ENCODE measurements at regions of chr10 and their contacts with region 1.

Region 1: DNA sequence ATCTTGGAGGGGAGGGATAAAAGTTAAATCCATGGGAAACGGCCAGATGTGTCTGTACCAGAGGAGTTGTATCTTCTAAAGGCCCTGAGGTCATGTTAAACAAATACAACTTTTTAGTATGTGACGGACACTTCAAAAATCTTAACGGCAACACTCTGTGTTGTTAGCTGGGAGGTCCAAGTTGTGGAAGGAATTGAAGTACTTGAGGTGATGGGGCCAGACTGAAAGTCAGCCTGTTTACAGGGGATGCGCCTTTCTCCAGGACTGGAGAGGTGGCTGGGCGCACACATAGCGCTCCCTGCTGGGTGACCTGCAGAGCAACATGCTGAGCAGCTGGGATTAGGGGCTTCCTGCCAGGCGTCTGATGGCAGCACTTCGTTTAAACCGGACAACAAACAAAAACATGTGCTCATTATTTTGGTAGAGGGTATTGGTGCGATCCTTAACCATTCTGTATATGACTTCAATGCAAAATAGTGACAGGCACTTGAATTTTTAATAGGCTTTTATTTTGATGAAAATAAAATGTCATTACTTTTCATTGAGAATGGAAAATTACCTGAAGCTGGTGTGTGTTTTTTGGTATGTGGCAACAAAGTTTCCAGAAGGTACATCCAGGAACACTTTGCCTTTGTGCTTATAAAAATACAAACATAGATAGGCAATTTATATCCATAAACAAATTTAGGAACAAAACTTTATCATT is 198.2 kb downstream of the MLLT10 start:
- DNase-seq: peak; percentile 82
- ATAC-seq: peak; percentile 95
- H3K4me3 ChIP-seq: no peak overlapping the region
- H3K27ac ChIP-seq: no peak overlapping the region
- H3K4me1 ChIP-seq: peaks cover 4% of the 10 kb centered on the region
- H3K27me3 ChIP-seq: no peaks in the 10 kb centered on the region
- CTCF ChIP-seq: peak; percentile 93
- POLR2A ChIP-seq: no peak
- RAD21 ChIP-seq: peak; percentile 93

Region 2: GRCh38 chr10:21078410-21079329 is 653.5 kb before region 1 on chr10:
- CTCF ChIA-PET with region 1: no interaction called
- POLR2A ChIA-PET with region 1: no interaction called
- dilution Hi-C with region 1: no loop called
- in situ Hi-C with region 1: loop called (anchors 25 kb)
- intact Hi-C with region 1: no loop called
- DNase-seq: peak; percentile 61
- ATAC-seq: peak; percentile 98
- H3K4me3 ChIP-seq: no peak overlapping the region
- H3K27ac ChIP-seq: no peak overlapping the region
- H3K4me1 ChIP-seq: no peaks in the 10 kb centered on the region
- H3K27me3 ChIP-seq: 0 out of 2 replicates have a peak, but pooled peaks cover 2% of the 10 kb centered on the region
- CTCF ChIP-seq: peak; percentile 73
- POLR2A ChIP-seq: no peak
- RAD21 ChIP-seq: peak; percentile 84

Region 3: DNA sequence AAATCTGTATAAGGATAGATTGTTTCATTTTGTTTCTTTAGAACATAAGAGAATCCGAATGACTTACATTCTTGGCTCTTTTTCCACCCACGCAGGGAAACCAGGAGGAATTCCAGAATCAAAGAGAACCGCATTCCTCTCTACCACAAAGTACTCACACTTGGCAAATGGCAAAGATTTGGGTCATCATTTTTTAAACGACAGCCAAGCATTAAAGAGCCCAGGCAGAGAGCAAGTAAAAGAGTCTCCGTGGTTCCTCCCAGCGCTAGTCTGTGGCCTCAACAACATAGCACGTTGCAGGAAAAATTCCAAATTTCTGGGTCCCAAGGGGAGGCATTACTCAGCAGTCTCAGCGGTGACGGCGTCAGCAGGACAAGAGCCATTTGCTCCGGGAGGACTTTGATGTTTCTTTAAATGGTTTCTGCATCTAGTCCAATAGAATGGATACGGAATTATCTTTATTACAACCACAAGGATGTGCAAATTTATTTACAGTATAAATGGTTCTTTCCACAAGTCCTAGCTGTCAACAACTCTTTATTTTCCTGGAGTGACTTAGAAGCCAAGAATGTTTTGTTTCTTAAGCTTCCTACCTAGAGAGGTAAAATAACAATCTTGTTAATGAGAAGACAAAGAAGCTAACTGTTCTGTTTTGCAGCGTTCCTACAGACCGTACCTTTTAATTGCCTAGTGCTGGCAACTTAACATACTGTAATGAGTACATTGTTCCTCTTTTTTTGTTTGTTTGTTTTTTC is 439.3 kb before region 1 on chr10:
- CTCF ChIA-PET with region 1: no interaction called
- POLR2A ChIA-PET with region 1: no interaction called
- dilution Hi-C with region 1: no loop called
- in situ Hi-C with region 1: no loop called
- intact Hi-C with region 1: loop called (anchors 5 kb)
- DNase-seq: peak; percentile 98
- ATAC-seq: peak; percentile 94
- H3K4me3 ChIP-seq: peak overlapping the region; percentile 13
- H3K27ac ChIP-seq: peak overlapping the region; percentile 72
- H3K4me1 ChIP-seq: peaks cover 2% of the 10 kb centered on the region; the same call in 1 of the 2 replicates
- H3K27me3 ChIP-seq: no peaks in the 10 kb centered on the region
- CTCF ChIP-seq: no peak
- POLR2A ChIP-seq: no peak
- RAD21 ChIP-seq: peak; percentile 14; the same call in 1 of the 2 replicates

Region 4: DNA sequence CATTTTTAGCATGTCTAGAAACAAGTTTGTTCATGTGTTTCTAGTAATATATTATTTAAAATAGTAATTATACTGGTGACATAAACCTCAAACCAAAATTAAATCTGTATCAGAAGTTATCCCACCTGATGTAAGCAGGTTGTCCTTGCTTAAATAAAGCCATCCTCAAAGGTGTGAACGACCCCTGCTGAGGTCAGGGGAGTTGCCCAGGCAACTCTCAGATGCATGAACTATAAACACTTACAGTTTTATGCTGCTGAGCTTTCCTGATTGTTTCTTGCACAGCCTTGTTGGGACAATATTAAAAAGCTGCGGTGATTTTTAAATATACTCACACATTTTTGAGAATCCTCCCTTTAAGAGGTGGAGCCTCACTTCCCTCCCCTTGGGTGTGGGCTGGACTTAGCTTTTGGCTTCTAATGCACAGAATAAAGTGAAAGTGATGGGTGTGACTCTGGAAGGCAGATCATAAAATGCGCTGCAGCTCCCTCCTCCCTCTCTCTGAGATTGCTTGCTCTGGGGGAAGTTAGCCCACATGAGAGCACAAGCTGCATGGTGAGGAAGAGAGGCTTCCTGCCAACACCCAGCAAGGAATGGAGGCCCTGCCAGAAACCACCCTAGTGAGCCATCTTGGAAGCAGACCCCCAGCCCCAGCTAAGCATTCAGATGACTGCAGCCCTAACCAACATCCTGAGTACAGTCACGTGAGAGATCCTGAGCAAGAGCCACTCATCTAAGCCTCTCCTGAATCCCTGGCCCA is 359.4 kb before region 1 on chr10:
- CTCF ChIA-PET with region 1: no interaction called
- POLR2A ChIA-PET with region 1: no interaction called
- dilution Hi-C with region 1: no loop called
- in situ Hi-C with region 1: no loop called
- intact Hi-C with region 1: loop called (anchors 10 kb)
- DNase-seq: peak; percentile 92
- ATAC-seq: peak; percentile 99
- H3K4me3 ChIP-seq: peak overlapping the region; percentile 5; the same call in 1 of the 2 replicates
- H3K27ac ChIP-seq: peak overlapping the region; percentile 59
- H3K4me1 ChIP-seq: peaks cover 11% of the 10 kb centered on the region
- H3K27me3 ChIP-seq: no peaks in the 10 kb centered on the region
- CTCF ChIP-seq: no peak
- POLR2A ChIP-seq: no peak
- RAD21 ChIP-seq: no peak; the same call in 1 of the 2 replicates

Measured in IMR-90 (cell line).